ENCODE measurements at regions of chr2 and their contacts with region 1.

Region 1: GRCh38 chr2:104620801-104621200 is 233.1 kb upstream of the POU3F3 start:
- DNase-seq: no peak
- ATAC-seq: no peak
- H3K4me3 ChIP-seq: no peak overlapping the region
- H3K27ac ChIP-seq: no peak overlapping the region
- H3K4me1 ChIP-seq: no peaks in the 10 kb centered on the region
- H3K27me3 ChIP-seq: 0 out of 5 replicates have a peak, but pooled peaks cover 0 to 8% of the 10 kb centered on the region in 2 experiments
- CTCF ChIP-seq: no peak
- EP300 ChIP-seq: no peak
- POLR2A ChIP-seq: no peak
- RAD21 ChIP-seq: no peak

Region 2: DNA sequence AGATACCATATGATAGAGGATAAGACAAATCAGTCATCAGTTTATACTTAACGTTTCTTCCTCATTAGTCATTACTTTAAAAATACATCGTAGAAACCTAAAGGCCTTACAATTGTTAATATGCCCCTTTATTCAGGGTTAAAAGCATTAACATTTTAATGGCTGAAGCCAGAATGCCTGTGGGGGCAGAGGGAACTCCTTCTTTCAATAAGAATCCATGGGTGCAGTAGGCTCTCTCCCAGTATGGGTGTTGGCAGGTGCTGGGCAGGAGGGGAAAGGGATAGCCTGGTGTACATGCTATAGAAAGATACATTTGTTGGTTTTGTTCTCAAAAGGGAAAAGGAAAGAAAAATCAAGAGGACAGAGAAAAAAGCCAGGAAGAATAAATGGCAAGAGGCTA is 802.6 kb before region 1 on chr2:
- CTCF ChIA-PET with region 1: no interaction called
- POLR2A ChIA-PET with region 1: no interaction called
- in situ Hi-C with region 1: no loop called
- intact Hi-C with region 1: loop called (anchors 5 kb)
- DNase-seq: no peak
- ATAC-seq: no peak
- H3K4me3 ChIP-seq: no peak overlapping the region
- H3K27ac ChIP-seq: no peak overlapping the region
- H3K4me1 ChIP-seq: no peaks in the 10 kb centered on the region
- H3K27me3 ChIP-seq: no peaks in the 10 kb centered on the region
- CTCF ChIP-seq: no peak
- EP300 ChIP-seq: no peak
- POLR2A ChIP-seq: no peak
- RAD21 ChIP-seq: no peak

Region 3: GRCh38 chr2:104606056-104606455 is 14.7 kb before region 1 on chr2:
- CTCF ChIA-PET with region 1: no interaction called
- POLR2A ChIA-PET with region 1: no interaction called
- in situ Hi-C with region 1: no loop called
- intact Hi-C with region 1: no loop called
- DNase-seq: no peak
- ATAC-seq: no peak
- H3K4me3 ChIP-seq: no peak overlapping the region
- H3K27ac ChIP-seq: no peak overlapping the region
- H3K4me1 ChIP-seq: no peaks in the 10 kb centered on the region
- H3K27me3 ChIP-seq: no peaks in the 10 kb centered on the region
- CTCF ChIP-seq: no peak
- EP300 ChIP-seq: no peak
- POLR2A ChIP-seq: no peak
- RAD21 ChIP-seq: no peak

Measured in HepG2 (cell line).